OCI-LY7 (cell line): ENCODE measurements at regions of chrX and their contacts with region 1.

Region 1: GRCh38 chrX:7330971-7331746 is 183.2 kb upstream of the PUDP start:
- DNase-seq: no peak
- H3K4me3 ChIP-seq: no peak overlapping the region
- H3K27ac ChIP-seq: no peak overlapping the region
- H3K4me1 ChIP-seq: no peaks in the 10 kb centered on the region
- CTCF ChIP-seq: no peak

Region 2: DNA sequence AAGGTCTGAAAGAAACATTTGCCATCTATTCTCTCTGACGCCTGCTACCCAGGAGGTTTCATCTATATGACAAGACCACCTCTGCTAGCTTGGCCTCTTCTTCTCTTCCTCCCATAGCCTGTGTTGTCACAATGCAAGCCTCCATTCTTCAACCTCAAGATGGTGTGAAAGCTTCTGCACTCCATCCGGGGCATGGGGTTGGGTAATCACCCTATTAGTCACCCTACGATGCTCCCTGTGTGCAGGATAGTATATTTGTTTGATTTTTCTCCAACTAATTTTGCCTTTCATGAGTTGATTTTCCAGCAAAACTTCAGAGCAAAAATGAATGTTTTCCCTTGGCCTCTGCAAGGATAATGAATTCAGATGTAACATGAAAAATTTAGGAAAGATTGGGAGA is 311.6 kb before region 1 on chrX:
- CTCF ChIA-PET with region 1: no interaction called
- POLR2A ChIA-PET with region 1: no interaction called
- intact Hi-C with region 1: no loop called
- DNase-seq: no peak
- H3K4me3 ChIP-seq: no peak overlapping the region
- H3K27ac ChIP-seq: no peak overlapping the region
- H3K4me1 ChIP-seq: no peaks in the 10 kb centered on the region
- CTCF ChIP-seq: no peak

Region 3: DNA sequence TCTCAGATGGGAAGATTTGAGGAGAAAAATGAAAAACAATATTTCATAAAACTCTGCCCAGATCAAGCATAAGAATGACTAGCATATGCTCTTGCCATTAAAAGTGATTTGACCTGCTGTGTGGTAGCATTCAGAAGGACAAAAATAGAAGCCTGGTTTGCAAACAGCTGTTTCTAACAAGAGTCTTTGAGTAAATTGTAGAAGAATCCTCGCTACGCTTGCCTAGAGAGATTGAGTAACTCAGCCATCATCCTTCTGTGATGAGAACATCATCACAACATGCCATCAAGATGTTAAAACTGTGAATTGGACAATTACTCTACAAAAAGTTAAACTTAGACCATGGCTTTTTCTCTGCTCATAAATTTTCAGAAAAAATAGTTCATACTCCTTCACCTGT is 14.3 kb before region 1 on chrX:
- CTCF ChIA-PET with region 1: no interaction called
- POLR2A ChIA-PET with region 1: interaction called, 10 read pairs
- intact Hi-C with region 1: no loop called
- DNase-seq: no peak
- H3K4me3 ChIP-seq: no peak overlapping the region
- H3K27ac ChIP-seq: no peak overlapping the region
- H3K4me1 ChIP-seq: no peaks in the 10 kb centered on the region
- CTCF ChIP-seq: no peak

Region 4: GRCh38 chrX:7378406-7378805 is 47.2 kb after region 1 on chrX:
- CTCF ChIA-PET with region 1: no interaction called
- POLR2A ChIA-PET with region 1: no interaction called
- intact Hi-C with region 1: no loop called
- DNase-seq: no peak
- H3K4me3 ChIP-seq: no peak overlapping the region
- H3K27ac ChIP-seq: no peak overlapping the region
- H3K4me1 ChIP-seq: no peaks in the 10 kb centered on the region
- CTCF ChIP-seq: no peak